ENCODE measurements at regions of chr4 and their contacts with region 1.

Region 1: GRCh38 chr4:40149960-40150385 is 46.9 kb upstream of the RHOH start:
- DNase-seq: peak in 1 of 2 donors; percentile 40
- ATAC-seq: no peak
- H3K4me3 ChIP-seq: no peak overlapping the region
- H3K27ac ChIP-seq: no peak overlapping the region
- H3K4me1 ChIP-seq: no peaks in the 10 kb centered on the region
- H3K27me3 ChIP-seq: no peaks in the 10 kb centered on the region
- CTCF ChIP-seq: peak; percentile 63 to 83 (median 69)
- POLR2A ChIP-seq: no peak

Region 2: DNA sequence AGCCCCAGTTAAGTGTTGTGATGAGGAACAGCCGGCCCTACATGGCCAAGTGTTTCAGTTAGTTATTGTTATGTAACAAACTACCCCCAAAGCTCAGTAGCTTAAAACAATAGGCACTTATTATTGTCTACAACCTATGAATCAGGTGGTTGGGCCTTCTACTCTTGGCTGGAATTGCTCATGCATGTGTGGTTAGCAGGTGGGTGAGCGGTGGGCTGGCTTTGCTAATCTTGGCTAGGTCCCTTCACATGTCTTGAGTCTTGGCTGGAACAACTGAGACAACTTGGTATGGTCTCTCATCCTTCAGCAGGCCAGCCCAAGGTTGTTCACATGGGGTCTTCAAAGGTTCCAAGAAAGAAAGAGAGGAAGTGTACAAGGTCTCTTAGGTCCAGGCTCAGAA is 130.6 kb after region 1 on chr4:
- in situ Hi-C with region 1: no loop called
- intact Hi-C with region 1: no loop called
- DNase-seq: no peak
- ATAC-seq: no peak
- H3K4me3 ChIP-seq: no peak overlapping the region
- H3K27ac ChIP-seq: no peak overlapping the region
- H3K4me1 ChIP-seq: no peaks in the 10 kb centered on the region
- H3K27me3 ChIP-seq: no peaks in the 10 kb centered on the region
- CTCF ChIP-seq: no peak
- POLR2A ChIP-seq: no peak

Region 3: GRCh38 chr4:40309250-40309774 is 159.3 kb after region 1 on chr4:
- in situ Hi-C with region 1: loop called in 2 of 4 experiments (anchors 5 kb)
- intact Hi-C with region 1: loop called (anchors 1 kb)
- DNase-seq: peak; percentile 49 to 61
- ATAC-seq: peak; percentile 68 to 71
- H3K4me3 ChIP-seq: no peak overlapping the region
- H3K27ac ChIP-seq: no peak overlapping the region
- H3K4me1 ChIP-seq: no peaks in the 10 kb centered on the region
- H3K27me3 ChIP-seq: no peaks in the 10 kb centered on the region
- CTCF ChIP-seq: peak; percentile 57 to 83 (median 73)
- POLR2A ChIP-seq: no peak